Endothelial cell of umbilical vein (primary cell): ENCODE measurements at regions of chr13 and their contacts with region 1.

Region 1: DNA sequence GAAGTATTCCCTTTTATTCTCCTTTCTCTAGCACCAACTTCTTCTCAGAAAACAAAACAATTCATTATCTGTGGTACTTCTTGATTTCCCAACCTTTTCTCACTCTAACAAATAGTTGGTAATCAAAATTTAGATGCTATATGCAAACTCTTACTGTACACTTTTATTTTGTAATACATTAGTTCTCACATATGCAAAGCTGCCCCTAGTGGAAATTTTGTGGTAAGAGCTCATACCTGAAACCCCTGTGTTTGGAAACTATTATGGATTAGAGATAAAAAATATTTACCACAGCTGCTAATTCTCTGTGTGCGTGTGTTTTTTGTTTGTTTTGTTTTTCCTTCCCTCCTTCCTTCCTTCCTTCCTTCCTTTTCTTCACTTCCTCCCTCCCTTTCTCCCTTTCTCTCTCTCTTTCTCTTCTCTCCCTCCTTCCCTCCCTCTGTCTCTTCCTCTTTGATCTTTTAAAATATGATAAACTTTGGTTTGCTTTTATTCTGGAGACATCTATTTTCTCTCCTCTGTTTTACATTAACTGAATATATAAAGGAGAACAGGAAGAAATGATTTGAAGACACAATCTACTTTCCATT is 537.4 kb downstream of the SLITRK6 start:
- DNase-seq: peak; percentile 21
- H3K4me3 ChIP-seq: no peak overlapping the region
- H3K27ac ChIP-seq: no peak overlapping the region
- H3K4me1 ChIP-seq: no peaks in the 10 kb centered on the region
- H3K27me3 ChIP-seq: no peaks in the 10 kb centered on the region
- CTCF ChIP-seq: peak in 1 of 2 donors; percentile 43
- POLR2A ChIP-seq: no peak

Region 2: DNA sequence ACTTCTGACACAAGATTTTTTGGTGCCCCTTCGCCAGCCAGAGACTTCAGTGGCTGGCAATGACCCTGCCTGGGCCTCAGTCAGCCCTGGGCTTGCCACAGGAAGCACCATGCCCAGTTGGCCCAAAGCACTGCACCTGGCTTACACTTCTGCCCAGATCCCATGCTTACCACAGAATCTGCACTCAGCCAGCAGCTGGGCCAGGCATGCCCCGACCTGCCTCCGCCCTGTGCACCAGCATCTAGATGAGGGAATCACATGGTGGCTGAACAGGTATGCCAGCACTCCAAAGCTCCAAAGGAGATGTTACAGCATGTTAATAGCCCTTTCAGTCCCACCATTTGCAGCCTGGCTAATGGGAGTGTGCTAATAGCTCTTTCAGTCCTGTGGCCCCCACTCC is 153.5 kb before region 1 on chr13:
- CTCF ChIA-PET with region 1: no interaction called
- POLR2A ChIA-PET with region 1: no interaction called
- dilution Hi-C with region 1: no loop called
- intact Hi-C with region 1: no loop called
- DNase-seq: no peak
- H3K4me3 ChIP-seq: no peak overlapping the region
- H3K27ac ChIP-seq: no peak overlapping the region
- H3K4me1 ChIP-seq: no peaks in the 10 kb centered on the region
- H3K27me3 ChIP-seq: no peaks in the 10 kb centered on the region
- CTCF ChIP-seq: no peak
- POLR2A ChIP-seq: no peak

Region 3: DNA sequence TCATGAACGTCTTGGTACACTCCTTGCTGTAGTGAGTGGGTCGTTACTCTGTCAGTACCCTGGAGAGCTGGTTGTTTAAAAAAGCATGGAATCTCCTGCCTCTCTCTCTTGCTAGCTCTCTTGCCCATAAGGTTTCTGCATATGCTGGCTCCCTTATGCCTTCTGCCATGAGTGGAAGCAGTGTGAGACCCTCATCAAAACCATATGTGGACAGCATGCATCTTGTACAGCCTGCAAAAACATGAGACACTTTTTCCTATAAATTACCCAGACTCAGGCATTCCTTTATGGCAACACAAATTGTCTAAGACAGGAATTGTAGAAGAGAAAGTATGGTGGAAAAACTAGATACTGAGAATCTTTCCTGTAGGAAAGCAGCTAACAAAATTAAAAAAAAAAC is 21.0 kb after region 1 on chr13:
- CTCF ChIA-PET with region 1: interaction called, 12 read pairs
- POLR2A ChIA-PET with region 1: no interaction called
- dilution Hi-C with region 1: no loop called
- intact Hi-C with region 1: no loop called
- DNase-seq: no peak
- H3K4me3 ChIP-seq: no peak overlapping the region
- H3K27ac ChIP-seq: no peak overlapping the region
- H3K4me1 ChIP-seq: peaks cover 2% of the 10 kb centered on the region
- H3K27me3 ChIP-seq: no peaks in the 10 kb centered on the region
- CTCF ChIP-seq: no peak
- POLR2A ChIP-seq: no peak